ENCODE measurements at regions of chr14 and their contacts with region 1.

Region 1: DNA sequence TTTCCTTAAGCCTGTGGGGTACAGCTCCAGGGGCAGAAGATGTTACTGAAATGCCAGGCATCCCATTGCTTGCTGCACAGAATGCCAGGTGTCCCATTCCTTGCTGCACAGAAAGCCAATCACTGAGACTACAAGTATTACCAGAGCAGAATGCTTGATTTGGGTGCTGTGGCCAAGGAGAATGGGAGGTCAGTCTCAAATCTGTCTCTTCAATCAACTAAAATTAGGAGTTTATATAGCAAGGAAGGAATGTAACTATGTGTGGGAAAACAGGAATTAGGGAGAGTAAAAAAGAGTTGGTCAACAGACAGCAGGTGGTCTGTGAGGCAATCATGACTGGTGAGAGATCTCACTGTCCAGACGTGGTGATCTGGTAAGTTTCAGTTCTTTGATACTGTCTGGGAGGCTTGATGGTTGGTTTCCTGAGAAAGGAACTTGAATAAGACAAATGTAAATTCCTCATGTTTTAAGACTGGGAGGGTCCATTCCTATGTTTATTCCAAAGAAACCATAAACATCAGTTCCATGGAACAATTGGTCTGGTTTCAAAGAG is 31.2 kb upstream of the VASH1 start:
- DNase-seq: no peak
- H3K4me3 ChIP-seq: no peak overlapping the region
- H3K27ac ChIP-seq: no peak overlapping the region
- H3K4me1 ChIP-seq: no peaks in the 10 kb centered on the region
- H3K27me3 ChIP-seq: peaks cover 85% of the 10 kb centered on the region
- CTCF ChIP-seq: no peak

Region 2: GRCh38 chr14:76760331-76761135 is 30.5 kb after region 1 on chr14:
- CTCF ChIA-PET with region 1: no interaction called
- POLR2A ChIA-PET with region 1: no interaction called
- intact Hi-C with region 1: no loop called
- DNase-seq: no peak
- H3K4me3 ChIP-seq: no peak overlapping the region
- H3K27ac ChIP-seq: no peak overlapping the region
- H3K4me1 ChIP-seq: no peaks in the 10 kb centered on the region
- H3K27me3 ChIP-seq: peaks cover 99% of the 10 kb centered on the region
- CTCF ChIP-seq: no peak

Region 3: GRCh38 chr14:76918751-76919543 is 188.9 kb after region 1 on chr14:
- CTCF ChIA-PET with region 1: no interaction called
- POLR2A ChIA-PET with region 1: no interaction called
- intact Hi-C with region 1: no loop called
- DNase-seq: peak; percentile 98 to 100
- H3K4me3 ChIP-seq: peak overlapping the region; percentile 20; the same call in 1 of the 2 replicates
- H3K27ac ChIP-seq: peak overlapping the region; percentile 91
- H3K4me1 ChIP-seq: peaks cover 79% of the 10 kb centered on the region
- H3K27me3 ChIP-seq: no peaks in the 10 kb centered on the region
- CTCF ChIP-seq: peak; percentile 43; the same call in 1 of the 2 replicates

Region 4: GRCh38 chr14:76937181-76938091 is 207.4 kb after region 1 on chr14:
- CTCF ChIA-PET with region 1: interaction called, 14 read pairs
- POLR2A ChIA-PET with region 1: no interaction called
- intact Hi-C with region 1: no loop called
- DNase-seq: peak in 1 of 2 experiments; percentile 48
- H3K4me3 ChIP-seq: no peak overlapping the region
- H3K27ac ChIP-seq: no peak overlapping the region
- H3K4me1 ChIP-seq: no peaks in the 10 kb centered on the region
- H3K27me3 ChIP-seq: no peaks in the 10 kb centered on the region
- CTCF ChIP-seq: no peak